GM12878 (cell line): ENCODE measurements at regions of chr5 and their contacts with region 1.

Region 1: GRCh38 chr5:76544268-76544926 is 78.8 kb downstream of the F2RL2 start:
- DNase-seq: peak; percentile 25
- ATAC-seq: peak; percentile 55
- H3K4me3 ChIP-seq: no peak overlapping the region
- H3K27ac ChIP-seq: peak overlapping the region; percentile 35; the same call in 1 of the 2 replicates
- H3K4me1 ChIP-seq: peaks cover 37% of the 10 kb centered on the region
- H3K27me3 ChIP-seq: no peaks in the 10 kb centered on the region
- CTCF ChIP-seq: peak; percentile 64 to 81 (median 68); a peak in 5 of 6 replicates
- EP300 ChIP-seq: no peak
- POLR2A ChIP-seq: no peak
- RAD21 ChIP-seq: peak; percentile 77

Region 2: DNA sequence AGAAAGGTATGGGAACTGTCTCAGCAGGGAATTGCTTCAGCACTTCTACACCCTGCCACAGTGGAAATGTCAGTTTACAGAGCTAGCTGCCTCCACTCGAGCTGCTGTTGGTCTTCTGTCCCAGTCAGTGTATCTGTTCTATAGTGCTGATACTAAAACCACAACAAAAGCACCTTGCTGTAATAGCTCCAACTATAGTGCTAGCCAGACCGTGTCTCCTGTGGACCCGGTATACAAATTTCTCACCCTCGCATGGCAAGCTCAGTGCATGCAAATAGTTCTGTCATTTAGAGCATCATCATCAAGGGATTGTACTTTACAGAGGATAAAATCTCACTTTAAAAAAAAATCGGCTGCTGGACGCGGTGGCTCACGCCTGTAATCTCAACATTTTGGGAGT is 192.8 kb before region 1 on chr5:
- CTCF ChIA-PET with region 1: interaction called, 9 read pairs
- POLR2A ChIA-PET with region 1: no interaction called
- RAD21 ChIA-PET with region 1: interaction called, 8 read pairs
- SMC1A ChIA-PET with region 1: interaction called, 6 read pairs
- in situ Hi-C with region 1: no loop called
- intact Hi-C with region 1: loop called (anchors 5 kb)
- DNase-seq: peak; percentile 87
- ATAC-seq: peak; percentile 100
- H3K4me3 ChIP-seq: no peak overlapping the region; the same call in 1 of the 2 replicates
- H3K27ac ChIP-seq: peak overlapping the region; percentile 15; the same call in 1 of the 2 replicates
- H3K4me1 ChIP-seq: peaks cover 10% of the 10 kb centered on the region
- H3K27me3 ChIP-seq: no peaks in the 10 kb centered on the region
- CTCF ChIP-seq: no peak
- EP300 ChIP-seq: peak; percentile 38 to 61; a peak in 2 of 4 replicates
- POLR2A ChIP-seq: no peak
- RAD21 ChIP-seq: no peak

Region 3: GRCh38 chr5:76510553-76510952 is 33.8 kb before region 1 on chr5:
- CTCF ChIA-PET with region 1: no interaction called
- POLR2A ChIA-PET with region 1: no interaction called
- RAD21 ChIA-PET with region 1: no interaction called
- SMC1A ChIA-PET with region 1: no interaction called
- in situ Hi-C with region 1: no loop called
- intact Hi-C with region 1: no loop called
- DNase-seq: no peak
- ATAC-seq: no peak
- H3K4me3 ChIP-seq: no peak overlapping the region
- H3K27ac ChIP-seq: no peak overlapping the region
- H3K4me1 ChIP-seq: no peaks in the 10 kb centered on the region
- H3K27me3 ChIP-seq: no peaks in the 10 kb centered on the region
- CTCF ChIP-seq: no peak
- EP300 ChIP-seq: no peak
- POLR2A ChIP-seq: no peak
- RAD21 ChIP-seq: no peak

Region 4: GRCh38 chr5:76556511-76557221 is 12.3 kb after region 1 on chr5:
- CTCF ChIA-PET with region 1: interaction called, 7 read pairs
- POLR2A ChIA-PET with region 1: interaction called, 7 read pairs
- RAD21 ChIA-PET with region 1: interaction called, 13 read pairs
- SMC1A ChIA-PET with region 1: interaction called, 24 read pairs
- in situ Hi-C with region 1: no loop called
- intact Hi-C with region 1: no loop called
- DNase-seq: peak; percentile 65
- ATAC-seq: peak; percentile 98
- H3K4me3 ChIP-seq: no peak overlapping the region
- H3K27ac ChIP-seq: peak overlapping the region; percentile 38
- H3K4me1 ChIP-seq: peaks cover 19% of the 10 kb centered on the region
- H3K27me3 ChIP-seq: no peaks in the 10 kb centered on the region
- CTCF ChIP-seq: no peak
- EP300 ChIP-seq: no peak
- POLR2A ChIP-seq: no peak
- RAD21 ChIP-seq: peak; percentile 29; the same call in 1 of the 2 replicates

Region 5: DNA sequence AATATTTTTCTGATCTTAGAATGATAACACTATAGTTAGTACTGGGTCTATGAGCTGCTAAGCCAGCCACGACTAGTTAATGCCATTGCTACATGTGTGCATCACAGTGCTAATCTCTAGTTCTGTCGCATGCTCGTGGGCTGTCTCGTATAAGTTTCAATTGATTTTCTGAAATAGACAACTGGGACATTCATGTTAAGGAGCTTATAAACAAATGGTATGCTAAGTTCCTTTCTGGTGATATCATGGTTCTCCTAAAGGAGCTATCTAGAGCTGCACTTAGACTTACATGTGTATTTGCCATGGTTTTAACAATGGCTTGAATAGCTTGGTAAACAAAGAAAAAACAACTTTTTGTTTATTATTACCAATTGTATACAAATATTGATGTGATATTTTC is 32.6 kb after region 1 on chr5:
- CTCF ChIA-PET with region 1: interaction called, 65 read pairs
- POLR2A ChIA-PET with region 1: interaction called, 25 read pairs
- RAD21 ChIA-PET with region 1: interaction called, 72 read pairs
- SMC1A ChIA-PET with region 1: interaction called, 56 read pairs
- in situ Hi-C with region 1: no loop called
- intact Hi-C with region 1: no loop called
- DNase-seq: no peak
- ATAC-seq: no peak
- H3K4me3 ChIP-seq: no peak overlapping the region
- H3K27ac ChIP-seq: no peak overlapping the region
- H3K4me1 ChIP-seq: peaks cover 5% of the 10 kb centered on the region; the same call in 1 of the 2 replicates
- H3K27me3 ChIP-seq: no peaks in the 10 kb centered on the region
- CTCF ChIP-seq: no peak
- EP300 ChIP-seq: no peak
- POLR2A ChIP-seq: no peak
- RAD21 ChIP-seq: no peak

Region 6: DNA sequence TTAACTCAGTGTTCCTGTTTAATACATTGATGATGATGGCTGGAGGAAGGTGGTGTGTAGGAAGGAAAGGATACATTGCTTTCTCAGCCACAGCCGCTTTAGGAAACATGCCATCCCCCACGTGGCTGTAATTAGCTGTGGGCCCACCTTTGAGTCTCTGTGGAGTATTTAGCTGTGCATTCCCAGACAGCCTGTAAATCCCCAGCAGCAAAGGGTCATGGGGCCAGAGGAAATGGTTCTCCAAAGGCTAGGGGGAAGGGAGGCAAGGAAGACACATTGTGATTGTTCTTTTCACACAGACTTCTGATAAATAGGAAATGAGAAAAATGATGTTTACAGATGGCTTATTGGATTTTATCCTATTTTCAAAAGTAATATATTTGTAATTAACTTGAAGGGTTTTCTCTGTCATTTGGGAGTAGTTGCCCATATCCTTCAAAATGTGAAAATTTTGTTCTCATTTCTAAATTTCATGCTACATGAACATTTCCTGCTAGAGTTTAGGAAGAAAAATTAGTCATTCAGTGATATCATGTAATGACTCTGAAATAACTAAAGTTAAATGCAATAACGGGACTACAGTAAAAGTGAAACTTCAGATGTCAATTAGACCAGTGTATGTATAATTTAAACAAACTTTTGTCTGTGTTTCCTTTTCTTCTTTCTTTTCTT is 147.2 kb after region 1 on chr5:
- CTCF ChIA-PET with region 1: no interaction called
- POLR2A ChIA-PET with region 1: no interaction called
- RAD21 ChIA-PET with region 1: no interaction called
- SMC1A ChIA-PET with region 1: no interaction called
- in situ Hi-C with region 1: no loop called
- intact Hi-C with region 1: no loop called
- DNase-seq: peak; percentile 11
- ATAC-seq: peak; percentile 88
- H3K4me3 ChIP-seq: no peak overlapping the region
- H3K27ac ChIP-seq: peak overlapping the region; percentile 13; the same call in 1 of the 2 replicates
- H3K4me1 ChIP-seq: peaks cover 10% of the 10 kb centered on the region
- H3K27me3 ChIP-seq: no peaks in the 10 kb centered on the region
- CTCF ChIP-seq: no peak
- EP300 ChIP-seq: no peak; a peak in 1 of 4 replicates
- POLR2A ChIP-seq: no peak
- RAD21 ChIP-seq: no peak